AG04449 (cell line): ENCODE measurements at regions of chr2 and their contacts with region 1.

Region 1: GRCh38 chr2:205495819-205496218 is 186.5 kb upstream of the NRP2 start:
- DNase-seq: no peak
- H3K4me3 ChIP-seq: no peak overlapping the region
- CTCF ChIP-seq: no peak

Region 2: DNA sequence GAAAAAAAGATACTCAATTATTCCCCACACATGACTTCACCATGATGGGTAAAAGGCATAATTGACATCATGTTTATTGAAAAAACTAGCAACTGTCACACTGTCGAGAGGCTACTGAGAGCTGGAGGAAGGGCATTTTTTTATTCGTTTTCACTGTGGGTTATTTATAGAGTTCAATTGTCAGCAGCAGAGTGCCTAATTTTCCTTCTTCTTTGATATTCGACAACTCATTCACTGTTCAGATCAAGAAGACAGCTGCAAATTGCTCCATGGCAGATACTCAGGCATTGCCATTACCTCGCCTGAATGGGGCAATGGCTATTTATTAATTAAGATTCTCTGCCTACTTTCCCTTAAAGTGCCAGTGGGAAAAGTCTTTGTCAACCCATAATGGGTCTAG is 11.1 kb before region 1 on chr2:
- CTCF ChIA-PET with region 1: interaction called, 15 read pairs
- POLR2A ChIA-PET with region 1: no interaction called
- DNase-seq: no peak
- H3K4me3 ChIP-seq: no peak overlapping the region
- CTCF ChIP-seq: no peak

Region 3: DNA sequence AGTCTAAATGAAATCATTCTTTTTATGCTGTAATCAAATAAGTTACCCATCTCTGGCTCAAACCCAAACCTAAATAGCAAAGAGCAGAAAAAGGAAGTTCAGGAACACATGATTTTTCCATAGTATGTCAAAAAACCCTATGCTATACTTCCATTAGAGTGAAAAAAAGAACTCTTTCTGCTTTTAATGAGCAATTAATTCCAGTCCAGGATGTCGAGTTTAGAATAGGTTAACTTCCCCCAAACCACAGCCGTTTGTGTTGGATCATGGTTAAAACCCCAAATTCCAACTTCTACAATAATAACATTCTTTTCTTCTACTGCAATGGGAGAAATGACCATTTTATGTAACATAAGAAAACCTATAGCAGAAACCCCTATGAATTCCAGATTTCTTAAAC is 15.4 kb after region 1 on chr2:
- CTCF ChIA-PET with region 1: interaction called, 11 read pairs
- POLR2A ChIA-PET with region 1: no interaction called
- DNase-seq: peak; percentile 70
- H3K4me3 ChIP-seq: no peak overlapping the region
- CTCF ChIP-seq: no peak